ENCODE measurements at regions of chr6 and their contacts with region 1.

Region 1: GRCh38 chr6:134938896-134939295 is 11.0 kb downstream of the ALDH8A1 start:
- DNase-seq: no peak
- H3K4me3 ChIP-seq: no peak overlapping the region
- H3K27ac ChIP-seq: no peak overlapping the region
- H3K27me3 ChIP-seq: no peaks in the 10 kb centered on the region
- CTCF ChIP-seq: no peak

Region 2: DNA sequence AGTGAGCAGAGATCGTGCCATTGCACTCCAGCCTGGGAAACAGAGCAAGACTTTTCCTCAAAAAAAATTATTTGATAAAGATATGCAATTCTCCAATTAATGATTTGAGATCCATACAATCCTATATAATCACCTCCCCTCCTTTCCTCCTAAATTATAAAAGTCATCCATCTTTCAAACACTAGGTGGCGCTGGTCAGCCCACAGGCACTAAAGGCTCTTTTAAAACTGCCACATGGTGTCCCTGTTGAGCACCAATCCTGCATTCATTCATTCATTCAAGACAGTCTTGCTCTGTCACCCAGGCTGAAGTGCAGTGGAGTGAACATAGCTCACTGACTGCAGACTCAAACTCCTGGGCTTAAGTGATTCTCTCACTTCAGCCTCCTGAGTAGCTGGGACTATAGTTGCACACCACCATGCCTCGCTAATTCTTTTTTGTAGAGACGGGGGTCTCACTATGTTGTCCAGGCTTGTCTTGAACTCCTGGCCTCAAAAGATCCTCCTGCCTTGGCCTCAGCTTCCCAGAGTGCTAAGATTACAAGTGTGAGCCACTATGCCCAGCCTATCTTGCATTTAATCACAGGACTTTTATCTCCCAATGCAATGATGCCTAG is 827.7 kb before region 1 on chr6:
- CTCF ChIA-PET with region 1: interaction called, 20 read pairs
- POLR2A ChIA-PET with region 1: no interaction called
- DNase-seq: no peak
- H3K4me3 ChIP-seq: no peak overlapping the region
- H3K27ac ChIP-seq: no peak overlapping the region
- H3K27me3 ChIP-seq: no peaks in the 10 kb centered on the region
- CTCF ChIP-seq: peak; percentile 76

Region 3: DNA sequence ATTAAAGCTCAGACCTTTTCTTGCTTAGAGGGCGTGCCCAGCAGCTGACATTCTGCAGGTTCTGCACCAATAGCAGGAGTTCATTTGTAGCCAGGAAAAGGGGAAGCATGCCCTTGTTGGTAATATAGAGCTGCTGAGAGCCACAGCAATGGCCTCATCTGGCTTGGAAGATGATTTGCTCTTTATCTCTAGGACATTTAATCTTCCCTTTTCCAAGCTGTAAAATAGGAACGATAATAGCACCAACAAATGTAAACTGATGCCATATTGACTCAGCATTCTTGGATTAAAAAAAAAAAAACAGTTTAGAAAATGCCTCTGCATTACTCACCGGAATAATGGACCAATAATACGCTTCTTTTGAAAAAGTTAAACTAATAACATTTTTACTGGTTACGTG is 793.1 kb before region 1 on chr6:
- CTCF ChIA-PET with region 1: interaction called, 10 read pairs
- POLR2A ChIA-PET with region 1: no interaction called
- DNase-seq: no peak
- H3K4me3 ChIP-seq: no peak overlapping the region
- H3K27ac ChIP-seq: peak overlapping the region; percentile 47
- H3K27me3 ChIP-seq: no peaks in the 10 kb centered on the region
- CTCF ChIP-seq: no peak

Region 4: GRCh38 chr6:134178230-134179044 is 760.5 kb before region 1 on chr6:
- CTCF ChIA-PET with region 1: interaction called, 15 read pairs
- POLR2A ChIA-PET with region 1: no interaction called
- DNase-seq: peak; percentile 86
- H3K4me3 ChIP-seq: peak overlapping the region; percentile 55
- H3K27ac ChIP-seq: peak overlapping the region; percentile 79
- H3K27me3 ChIP-seq: no peaks in the 10 kb centered on the region
- CTCF ChIP-seq: peak; percentile 97

Region 5: DNA sequence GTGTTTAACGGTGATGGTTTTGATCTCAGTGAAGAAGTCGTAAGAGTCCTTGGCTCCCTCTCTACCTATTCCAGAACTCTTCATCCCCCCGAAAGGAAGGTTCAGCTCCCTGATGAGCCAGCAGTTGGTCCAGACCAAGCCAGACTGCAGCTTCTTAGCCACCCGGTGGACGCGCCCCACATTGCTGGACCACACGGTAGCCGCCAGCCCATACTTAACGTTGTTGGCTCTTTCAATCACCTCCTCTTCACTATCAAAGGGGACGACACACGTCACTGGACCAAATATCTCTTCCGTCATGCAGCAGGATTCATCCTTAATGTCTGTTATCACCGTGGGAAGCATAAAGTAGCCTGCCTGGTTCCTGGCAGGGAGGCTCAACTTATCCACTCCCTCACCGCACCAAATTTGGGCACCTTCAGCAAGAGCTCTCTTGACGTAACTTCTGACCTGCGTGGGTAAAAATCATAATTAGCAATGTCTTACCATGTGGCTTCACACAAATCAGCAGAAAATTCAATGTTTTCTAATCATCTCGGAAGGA is 20.4 kb before region 1 on chr6:
- CTCF ChIA-PET with region 1: interaction called, 21 read pairs
- POLR2A ChIA-PET with region 1: no interaction called
- DNase-seq: no peak
- H3K4me3 ChIP-seq: no peak overlapping the region
- H3K27ac ChIP-seq: no peak overlapping the region
- H3K27me3 ChIP-seq: no peaks in the 10 kb centered on the region
- CTCF ChIP-seq: no peak

Measured in AG04450 (cell line).